Ascending aorta (tissue), 2 donors: ENCODE measurements at regions of chr11 and their contacts with region 1.

Region 1: DNA sequence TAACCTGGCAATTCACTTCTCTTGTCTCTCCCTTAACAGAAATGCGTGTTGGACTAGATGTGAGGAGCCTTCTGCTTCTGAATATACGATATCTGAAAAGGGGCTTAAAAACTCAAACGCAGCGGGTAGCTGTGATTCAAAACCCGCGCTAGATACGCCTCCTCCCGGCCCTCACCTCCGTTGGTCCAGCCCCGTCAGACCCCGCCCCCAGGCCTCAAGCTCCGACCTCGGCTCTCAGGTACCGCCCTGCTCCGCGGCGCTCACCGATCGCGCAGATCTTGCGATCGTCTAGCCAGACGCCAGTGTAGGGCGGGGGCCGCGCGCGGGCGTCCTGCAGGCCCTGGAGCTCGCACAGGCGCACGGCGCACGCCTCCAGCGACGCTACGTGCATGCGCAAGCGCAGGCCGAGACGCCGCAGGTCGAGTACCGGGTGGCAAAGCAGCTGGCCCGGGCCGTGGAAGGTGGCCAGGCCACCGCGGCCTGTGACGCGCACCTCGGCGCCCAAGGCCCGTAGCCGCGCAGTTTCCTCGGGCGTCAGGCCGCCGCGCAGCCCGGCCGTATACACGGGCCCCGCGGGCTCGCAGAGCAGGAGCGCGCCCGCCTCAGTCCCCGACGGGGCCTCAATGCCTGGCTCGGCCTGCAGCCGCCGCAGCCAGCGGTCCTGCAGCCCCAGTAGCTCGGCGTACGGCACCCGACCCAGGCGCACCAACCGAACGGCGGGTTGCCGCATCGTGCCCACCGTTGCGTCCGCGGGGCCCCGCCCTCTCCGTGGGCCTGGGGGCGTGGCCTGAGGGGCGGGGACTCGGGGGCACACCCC is at the start of gene LIPT2:
- DNase-seq: peak; percentile 89 to 97
- H3K4me3 ChIP-seq: peak within 1 kb of the TSS; percentile 64 to 95
- H3K27ac ChIP-seq: peak within 1 kb of the TSS; percentile 90 to 99
- H3K4me1 ChIP-seq: peaks cover 0 to 6% of the 10 kb centered on the region in 2 donors
- H3K27me3 ChIP-seq: no peaks in the 10 kb centered on the region
- CTCF ChIP-seq: no peak
- total RNA-seq, gene LIPT2: not detected

Region 2: GRCh38 chr11:74418509-74418895 is 74.7 kb before region 1 on chr11:
- intact Hi-C with region 1: loop called (anchors 2 kb)
- DNase-seq: no peak
- H3K4me3 ChIP-seq: no peak overlapping the region
- H3K27ac ChIP-seq: peak overlapping the region; percentile 84 to 94
- H3K4me1 ChIP-seq: peaks cover 6 to 11% of the 10 kb centered on the region in 2 donors
- H3K27me3 ChIP-seq: no peaks in the 10 kb centered on the region
- CTCF ChIP-seq: no peak

Region 3: GRCh38 chr11:74453373-74453975 is 39.7 kb before region 1 on chr11:
- intact Hi-C with region 1: no loop called
- DNase-seq: peak in 1 of 2 donors; percentile 72
- H3K4me3 ChIP-seq: no peak overlapping the region
- H3K27ac ChIP-seq: no peak overlapping the region
- H3K4me1 ChIP-seq: no peaks in the 10 kb centered on the region
- H3K27me3 ChIP-seq: no peaks in the 10 kb centered on the region
- CTCF ChIP-seq: peak; percentile 45 to 73 (median 55)

Region 4: DNA sequence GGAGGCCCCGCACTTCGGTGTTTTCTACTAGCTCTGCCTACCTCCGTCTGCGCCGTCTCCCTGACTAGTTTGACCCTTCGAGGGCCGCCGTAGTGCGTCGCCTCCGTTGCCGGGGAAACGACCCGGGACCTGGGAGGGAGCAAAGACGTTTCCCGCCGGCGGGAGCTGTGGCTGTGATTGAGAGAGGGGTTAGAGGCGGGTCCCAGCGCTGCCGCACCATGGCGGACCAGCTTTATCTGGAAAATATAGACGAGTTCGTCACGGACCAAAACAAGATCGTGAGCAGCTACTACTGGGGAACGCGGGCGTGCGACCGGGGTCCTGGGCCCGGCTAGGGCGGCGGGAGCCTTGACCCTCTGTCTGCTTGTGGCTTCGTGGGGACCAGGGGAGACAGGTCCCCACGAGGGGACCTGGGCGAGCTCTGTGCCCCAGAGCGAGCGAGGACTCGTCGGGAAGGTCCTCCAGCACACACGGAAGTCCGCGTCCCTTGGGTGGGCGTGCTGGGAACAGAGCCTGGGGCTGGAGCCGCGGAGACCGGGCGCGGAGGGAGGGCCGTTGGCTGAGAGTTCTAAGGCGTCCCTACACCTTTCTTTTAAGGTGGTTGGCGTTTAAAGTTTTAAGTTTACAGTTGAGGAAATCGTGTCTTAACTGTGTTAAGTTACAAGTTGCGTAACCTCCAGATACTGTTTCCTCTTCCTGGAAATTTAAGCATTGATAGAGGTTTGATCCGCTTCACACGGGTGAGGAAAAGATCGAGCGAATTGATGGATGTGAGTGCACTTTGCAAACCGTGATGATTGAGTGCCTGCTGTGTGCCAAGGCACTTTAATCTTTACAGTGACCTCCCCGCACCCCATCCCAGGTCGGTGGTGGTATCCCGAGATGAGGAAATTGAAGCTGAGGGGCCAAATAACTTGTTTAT is 99.5 kb after region 1 on chr11 and contains the start of gene POLD3:
- intact Hi-C with region 1: loop called (anchors 10 kb)
- DNase-seq: peak; percentile 65 to 96
- H3K4me3 ChIP-seq: peak within 1 kb of the TSS; percentile 70 to 91
- H3K27ac ChIP-seq: peak within 1 kb of the TSS; percentile 65 to 69
- H3K4me1 ChIP-seq: no peaks in the 10 kb centered on the region
- H3K27me3 ChIP-seq: no peaks in the 10 kb centered on the region
- CTCF ChIP-seq: no peak
- total RNA-seq, gene POLD3: 10.3 TPM

Region 5: DNA sequence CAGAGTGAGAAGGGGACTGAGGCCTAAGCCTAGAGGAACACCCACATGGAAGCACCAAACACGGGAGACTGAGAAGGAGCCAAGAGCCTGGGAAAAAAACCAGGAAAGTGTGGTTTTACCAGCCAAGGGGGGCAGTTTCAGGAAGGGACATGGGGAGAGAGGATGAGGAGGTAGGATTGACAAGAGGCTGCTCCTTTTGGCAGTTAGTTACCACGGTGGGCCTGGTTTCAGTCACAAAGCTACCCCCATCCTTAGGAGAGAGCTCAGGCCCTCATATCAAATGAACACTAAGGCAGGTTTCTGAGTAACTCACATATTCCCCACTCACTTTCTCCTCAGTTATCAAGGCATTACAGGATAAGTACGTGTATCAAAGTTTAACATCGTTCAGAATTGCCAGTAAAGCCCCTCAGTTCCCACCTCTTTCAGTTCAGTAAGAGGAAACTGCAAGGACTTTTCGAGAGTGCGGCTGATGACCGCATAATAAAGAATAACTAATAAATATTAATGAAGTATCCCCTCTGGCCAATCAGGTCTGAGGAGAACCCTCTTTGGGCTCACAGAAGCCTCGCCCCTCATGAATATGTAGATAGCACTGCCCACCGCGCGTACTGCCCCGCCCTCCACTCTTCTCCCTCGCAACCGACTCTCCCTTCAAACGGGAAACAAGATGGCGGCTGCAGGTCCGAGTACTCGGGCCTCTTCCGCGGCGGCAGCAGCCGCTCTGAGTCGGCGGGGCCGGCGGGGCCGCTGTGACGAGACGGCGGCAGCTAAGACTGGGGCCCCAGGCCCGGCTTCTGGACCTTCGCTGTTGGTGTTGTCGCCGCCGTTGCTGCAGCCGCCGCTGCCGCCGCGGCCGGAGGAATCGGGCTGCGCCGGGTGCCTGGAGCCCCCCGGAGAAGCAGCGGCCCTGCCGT is 255.3 kb after region 1 on chr11 and contains the start of gene RNF169:
- intact Hi-C with region 1: loop called (anchors 5 kb)
- DNase-seq: peak; percentile 90 to 98
- H3K4me3 ChIP-seq: peak within 1 kb of the TSS; percentile 72 to 97
- H3K27ac ChIP-seq: peak within 1 kb of the TSS; percentile 89 to 91
- H3K4me1 ChIP-seq: peaks cover 0 to 16% of the 10 kb centered on the region in 2 donors
- H3K27me3 ChIP-seq: no peaks in the 10 kb centered on the region
- CTCF ChIP-seq: no peak
- total RNA-seq, gene RNF169: 19.5 TPM